PC-9 (cell line): ENCODE measurements at regions of chr1 and their contacts with region 1.

Region 1: GRCh38 chr1:45686317-45687013 is at the start of gene GPBP1L1:
- DNase-seq: peak; percentile 82 to 98
- H3K4me3 ChIP-seq: peak within 1 kb of the TSS; percentile 94
- H3K27ac ChIP-seq: peak within 1 kb of the TSS; percentile 95
- H3K4me1 ChIP-seq: peaks cover 16% of the 10 kb centered on the region
- H3K27me3 ChIP-seq: no peaks in the 10 kb centered on the region
- CTCF ChIP-seq: no peak
- total RNA-seq, gene GPBP1L1: 124 and 138 TPM in 2 replicates

Region 2: GRCh38 chr1:44807262-44808062 is 879.0 kb before region 1 on chr1 and contains the start of gene DYNLT4:
- CTCF ChIA-PET with region 1: no interaction called
- POLR2A ChIA-PET with region 1: no interaction called
- intact Hi-C with region 1: loop called (anchors 2 kb)
- DNase-seq: peak; percentile 99
- H3K4me3 ChIP-seq: peak within 1 kb of the TSS; percentile 30; the same call in 1 of the 2 replicates
- H3K27ac ChIP-seq: peak within 1 kb of the TSS; percentile 98
- H3K4me1 ChIP-seq: peaks cover 95% of the 10 kb centered on the region
- H3K27me3 ChIP-seq: no peaks in the 10 kb centered on the region
- CTCF ChIP-seq: no peak
- total RNA-seq, gene DYNLT4: 2.8 and 4.3 TPM in 2 replicates

Region 3: DNA sequence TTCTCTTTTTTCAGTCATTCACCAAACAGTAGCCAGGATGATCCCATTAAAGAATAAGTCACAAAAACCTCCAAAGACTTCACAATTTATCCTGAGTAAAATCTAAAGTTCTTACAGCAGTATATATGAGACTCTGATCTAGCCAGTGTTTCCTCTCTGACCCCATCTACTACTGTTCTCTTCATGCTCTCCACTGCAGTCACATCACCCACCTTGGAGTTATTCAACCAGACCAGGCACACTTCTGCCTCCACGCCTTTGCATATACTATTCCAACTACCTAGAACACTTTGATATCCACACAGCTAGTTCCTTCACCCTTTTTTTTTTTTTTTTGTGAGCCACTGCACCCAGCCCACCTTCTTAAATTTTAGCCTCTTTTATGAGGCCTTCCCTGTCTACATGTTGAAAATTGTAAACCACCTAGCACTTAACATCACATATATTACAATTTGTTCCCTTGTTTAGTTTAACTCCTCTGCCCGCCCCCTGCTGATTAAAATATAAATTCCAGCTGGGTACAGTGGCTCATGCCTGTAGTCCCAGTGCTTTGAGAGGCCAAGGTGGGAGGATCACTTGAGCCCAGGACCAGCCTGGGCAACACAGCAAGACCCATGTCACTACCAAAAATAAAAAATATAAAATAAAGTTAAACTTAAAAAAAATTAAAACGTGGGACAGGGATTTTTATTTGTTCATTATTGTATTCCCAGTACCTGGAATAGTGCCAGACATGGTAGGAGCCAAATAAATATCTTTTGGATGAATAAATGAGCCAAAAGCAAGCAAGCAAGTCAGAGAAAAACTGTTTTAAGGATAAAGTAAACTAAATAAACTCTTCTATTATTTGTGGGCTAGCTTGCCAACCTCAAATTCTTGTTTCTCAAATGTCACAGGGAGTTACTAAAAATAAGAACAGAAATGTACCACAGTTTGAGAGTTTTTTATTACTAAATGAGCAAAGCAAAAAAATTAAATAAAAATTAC is 311.1 kb before region 1 on chr1:
- CTCF ChIA-PET with region 1: no interaction called
- POLR2A ChIA-PET with region 1: no interaction called
- intact Hi-C with region 1: no loop called
- DNase-seq: no peak
- H3K4me3 ChIP-seq: no peak overlapping the region
- H3K27ac ChIP-seq: no peak overlapping the region
- H3K4me1 ChIP-seq: no peaks in the 10 kb centered on the region
- H3K27me3 ChIP-seq: no peaks in the 10 kb centered on the region
- CTCF ChIP-seq: no peak; the same call in 1 of the 2 replicates

Region 4: GRCh38 chr1:45583264-45583665 is 103.2 kb before region 1 on chr1:
- CTCF ChIA-PET with region 1: no interaction called
- POLR2A ChIA-PET with region 1: interaction called, 4 read pairs
- intact Hi-C with region 1: loop called (anchors 2 kb)
- DNase-seq: peak; percentile 92 to 95
- H3K4me3 ChIP-seq: peak overlapping the region; percentile 86
- H3K27ac ChIP-seq: peak overlapping the region; percentile 64
- H3K4me1 ChIP-seq: peaks cover 17% of the 10 kb centered on the region
- H3K27me3 ChIP-seq: no peaks in the 10 kb centered on the region
- CTCF ChIP-seq: no peak

Region 5: DNA sequence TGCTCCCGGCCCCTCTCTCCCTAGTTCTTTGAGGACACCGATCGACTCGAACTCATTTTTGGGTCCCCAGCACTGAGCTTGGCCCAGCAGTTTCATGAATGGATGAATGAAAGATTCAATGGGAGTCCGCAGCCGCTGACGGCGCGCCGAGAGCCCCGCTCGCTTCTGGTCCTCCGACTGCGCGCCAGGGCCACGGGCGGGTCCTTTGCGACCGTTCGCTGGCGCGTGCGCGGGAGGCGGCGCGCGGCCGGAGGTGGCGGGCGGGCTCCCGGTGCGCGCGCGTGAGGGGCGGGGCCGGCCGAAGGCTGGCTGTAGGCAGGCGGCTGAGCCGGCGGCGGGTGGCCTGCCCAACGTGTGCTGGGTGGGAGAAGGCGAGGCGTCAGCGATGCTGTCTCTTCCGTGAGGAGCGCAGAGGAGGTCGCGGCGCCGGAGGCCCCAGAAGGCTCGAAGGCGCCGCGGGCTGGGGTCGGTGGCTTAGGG is 116.9 kb after region 1 on chr1 and contains the start of gene MAST2:
- CTCF ChIA-PET with region 1: no interaction called
- POLR2A ChIA-PET with region 1: interaction called, 5 read pairs
- intact Hi-C with region 1: loop called (anchors 5 kb)
- DNase-seq: peak; percentile 59 to 95
- H3K4me3 ChIP-seq: peak within 1 kb of the TSS; percentile 67
- H3K27ac ChIP-seq: peak within 1 kb of the TSS; percentile 70
- H3K4me1 ChIP-seq: peaks cover 19% of the 10 kb centered on the region
- H3K27me3 ChIP-seq: no peaks in the 10 kb centered on the region
- CTCF ChIP-seq: no peak
- total RNA-seq, gene MAST2: 58.8 and 69.3 TPM in 2 replicates

Region 6: DNA sequence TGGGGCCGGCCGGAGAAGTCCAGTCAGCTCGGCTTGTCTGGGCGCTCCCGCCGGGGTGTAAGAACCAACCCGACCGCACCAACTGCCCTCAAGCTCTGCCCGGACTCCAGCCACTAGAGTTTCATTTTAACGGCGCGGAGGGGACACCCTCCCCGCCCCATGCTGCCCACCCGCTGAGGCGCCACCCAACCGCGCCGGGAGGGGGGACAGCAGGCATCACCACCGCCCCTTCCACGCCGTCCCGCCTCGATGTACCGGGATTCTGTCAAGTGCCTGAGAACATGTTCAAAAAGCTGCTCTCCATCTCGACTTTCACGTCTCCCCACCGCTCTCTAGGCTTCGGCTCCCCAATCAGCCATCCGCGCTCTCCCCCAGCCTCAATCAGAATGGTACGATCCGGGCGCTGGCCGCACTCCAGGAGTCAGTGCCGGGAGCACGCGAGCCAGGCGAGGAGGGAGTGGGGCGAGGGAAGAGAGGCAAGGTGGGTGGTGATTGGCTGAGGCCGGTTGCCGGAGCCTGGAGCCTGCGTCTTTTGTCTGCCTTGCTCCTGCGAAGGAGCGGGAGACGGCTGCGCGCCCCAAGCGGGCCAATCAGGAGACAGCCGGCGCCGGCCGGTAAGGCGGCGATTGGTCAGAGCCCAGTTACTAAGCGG is 446.2 kb after region 1 on chr1 and contains the start of gene PIK3R3:
- CTCF ChIA-PET with region 1: no interaction called
- POLR2A ChIA-PET with region 1: no interaction called
- intact Hi-C with region 1: loop called (anchors 1 kb)
- DNase-seq: peak; percentile 95 to 99
- H3K4me3 ChIP-seq: peak within 1 kb of the TSS; percentile 95
- H3K27ac ChIP-seq: peak within 1 kb of the TSS; percentile 98
- H3K4me1 ChIP-seq: peaks cover 60% of the 10 kb centered on the region
- H3K27me3 ChIP-seq: no peaks in the 10 kb centered on the region
- CTCF ChIP-seq: no peak
- total RNA-seq, gene PIK3R3: 19.6 and 44.2 TPM in 2 replicates

Region 7: GRCh38 chr1:46247436-46248121 is 561.1 kb after region 1 on chr1 and contains the start of gene RAD54L:
- CTCF ChIA-PET with region 1: no interaction called
- POLR2A ChIA-PET with region 1: interaction called, 12 read pairs
- intact Hi-C with region 1: loop called (anchors 10 kb)
- DNase-seq: peak; percentile 95 to 99
- H3K4me3 ChIP-seq: peak within 1 kb of the TSS; percentile 72
- H3K27ac ChIP-seq: peak within 1 kb of the TSS; percentile 60
- H3K4me1 ChIP-seq: peaks cover 21% of the 10 kb centered on the region
- H3K27me3 ChIP-seq: no peaks in the 10 kb centered on the region
- CTCF ChIP-seq: no peak
- total RNA-seq, gene RAD54L: 44.8 and 56.4 TPM in 2 replicates